Motor neuron (in vitro differentiated cells): ENCODE measurements at regions of chr12 and their contacts with region 1.

Region 1: DNA sequence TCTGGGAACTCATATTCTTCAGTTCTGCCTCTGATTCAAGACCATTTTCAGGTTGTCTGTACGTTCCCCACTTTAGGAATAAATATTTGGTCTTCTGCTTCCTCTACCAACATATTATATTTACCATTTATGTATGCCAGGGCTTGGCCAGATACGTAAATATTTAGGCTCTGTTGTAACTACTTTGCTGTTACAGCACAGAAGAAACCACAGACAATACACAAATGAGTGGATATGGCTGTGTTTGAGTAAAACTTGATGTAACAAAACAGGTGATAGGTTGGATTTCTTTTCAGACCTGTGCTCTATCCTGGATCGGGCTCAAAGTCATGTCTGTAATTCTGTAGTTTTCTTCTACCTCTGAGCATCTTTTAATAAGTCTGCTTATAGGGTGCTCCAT is 37.5 kb downstream of the RAP1B start:
- ATAC-seq: no peak
- H3K4me3 ChIP-seq: no peak overlapping the region
- H3K27ac ChIP-seq: no peak overlapping the region
- H3K4me1 ChIP-seq: no peaks in the 10 kb centered on the region

Region 2: DNA sequence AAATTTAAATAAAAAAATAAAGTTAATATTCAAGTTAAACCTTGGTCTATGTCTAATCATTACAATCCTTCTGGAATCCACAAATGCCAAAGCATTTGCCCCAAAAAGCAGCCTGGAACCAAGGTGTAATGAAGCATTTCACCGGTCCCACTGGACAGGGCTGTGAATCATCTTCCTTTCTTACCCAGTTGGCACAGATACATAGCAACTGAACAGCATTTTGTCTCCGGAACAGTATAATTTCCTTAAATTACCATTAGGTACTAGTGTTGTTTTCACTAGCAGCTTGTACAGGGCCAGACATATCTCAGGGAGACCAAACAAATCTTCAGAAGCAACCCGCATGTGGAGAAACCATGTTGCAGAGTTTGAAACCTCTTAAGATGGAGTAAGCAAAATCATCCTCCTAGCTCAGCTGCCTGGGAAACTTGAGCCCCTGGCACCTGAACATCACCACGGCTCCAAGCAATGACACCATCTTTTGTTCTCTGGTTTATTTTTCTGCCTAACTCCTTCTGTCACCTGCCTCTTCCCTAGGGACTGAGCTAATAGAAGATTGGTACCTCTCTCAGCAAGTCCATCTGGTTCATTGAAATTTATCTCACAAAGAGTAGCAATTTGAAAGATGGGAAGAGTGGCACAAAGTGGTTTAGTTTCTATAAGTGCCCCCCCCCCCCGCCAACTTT is 298.1 kb before region 1 on chr12:
- in situ Hi-C with region 1: loop called in 1 of 9 experiments (anchors 10 kb)
- ATAC-seq: no peak
- H3K4me3 ChIP-seq: no peak overlapping the region
- H3K27ac ChIP-seq: no peak overlapping the region
- H3K4me1 ChIP-seq: peaks cover 6 to 13% of the 10 kb centered on the region in 2 donors